ENCODE measurements at regions of chr1 and their contacts with region 1.

Region 1: GRCh38 chr1:30790850-30791778 is 33.5 kb upstream of the LAPTM5 start:
- DNase-seq: peak; percentile 32
- ATAC-seq: peak; percentile 56
- H3K4me3 Mint-ChIP-seq: no peak overlapping the region
- H3K27ac Mint-ChIP-seq: no peak overlapping the region
- H3K4me1 Mint-ChIP-seq: peaks cover 9% of the 10 kb centered on the region
- H3K27me3 Mint-ChIP-seq: peaks cover 4% of the 10 kb centered on the region
- CTCF ChIP-seq: no peak

Region 2: DNA sequence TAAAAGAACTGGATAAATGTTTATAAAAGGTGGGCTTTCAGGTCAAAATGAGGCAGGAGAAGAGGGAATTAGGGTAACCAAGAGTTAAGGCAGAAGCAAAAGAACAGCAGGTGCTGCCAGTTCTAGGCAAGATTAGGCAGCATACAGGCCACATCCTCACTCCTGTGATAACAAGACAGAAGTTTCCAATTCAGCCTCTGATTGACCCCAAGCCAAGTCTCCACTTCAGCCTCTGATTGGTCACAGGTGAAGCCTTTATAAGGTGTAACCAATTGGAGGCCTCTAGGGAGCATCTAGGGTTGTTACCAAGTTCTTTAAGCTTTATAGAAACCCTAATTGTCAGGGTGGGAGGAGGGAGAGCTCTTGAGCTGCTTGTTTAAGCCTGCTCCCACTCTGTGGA is 228.6 kb before region 1 on chr1:
- CTCF ChIA-PET with region 1: no interaction called
- POLR2A ChIA-PET with region 1: no interaction called
- intact Hi-C with region 1: no loop called
- DNase-seq: no peak
- ATAC-seq: no peak
- H3K4me3 Mint-ChIP-seq: no peak overlapping the region
- H3K27ac Mint-ChIP-seq: no peak overlapping the region
- H3K4me1 Mint-ChIP-seq: no peaks in the 10 kb centered on the region
- H3K27me3 Mint-ChIP-seq: peaks cover 1% of the 10 kb centered on the region
- CTCF ChIP-seq: no peak

Region 3: DNA sequence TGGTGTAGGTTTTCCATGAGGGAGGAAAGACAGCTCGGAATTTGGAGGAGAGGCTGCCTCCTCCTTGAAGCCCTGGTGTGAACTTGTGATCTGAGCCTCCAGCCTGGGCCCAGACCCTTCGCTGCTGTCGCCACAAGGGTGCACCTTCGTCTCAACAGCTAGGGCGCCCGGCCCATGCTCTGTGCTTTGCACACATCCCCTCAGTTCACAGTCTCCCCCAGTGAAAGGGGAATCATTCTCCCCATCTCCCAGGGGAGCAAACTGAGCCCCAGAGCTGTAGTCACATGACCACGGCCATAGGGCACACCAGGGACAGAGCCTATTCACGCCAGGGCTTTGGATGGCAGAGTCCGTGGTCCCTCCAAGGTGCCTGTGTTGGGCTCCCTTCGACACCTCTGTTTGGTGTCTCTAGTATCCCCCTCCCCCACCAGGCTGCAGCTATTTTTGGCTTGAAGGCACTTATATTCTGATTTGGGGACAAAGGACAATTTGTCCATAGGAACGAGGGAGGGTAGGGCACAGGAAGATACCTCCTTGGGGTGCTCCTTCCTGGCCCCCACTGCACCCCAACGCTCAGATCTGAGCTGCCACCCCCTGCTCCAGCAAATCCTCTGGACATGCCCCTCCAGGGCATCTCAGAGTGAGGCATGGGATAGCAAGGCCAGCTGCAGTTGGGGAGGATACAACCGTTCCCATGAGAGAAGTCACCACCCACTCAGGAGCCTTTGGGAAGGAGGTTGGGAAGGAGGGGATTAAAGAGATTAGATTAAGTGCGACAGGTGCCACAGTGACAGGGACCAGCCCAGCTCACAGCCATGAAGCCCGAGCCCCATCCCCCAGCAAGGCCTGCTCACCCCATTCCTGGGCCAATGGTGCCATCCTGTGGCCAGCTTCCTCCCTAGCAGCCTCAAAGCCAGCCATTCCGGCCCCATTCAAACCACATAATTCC is 83.4 kb before region 1 on chr1:
- CTCF ChIA-PET with region 1: no interaction called
- POLR2A ChIA-PET with region 1: no interaction called
- intact Hi-C with region 1: no loop called
- DNase-seq: peak; percentile 71
- ATAC-seq: peak; percentile 95
- H3K4me3 Mint-ChIP-seq: no peak overlapping the region
- H3K27ac Mint-ChIP-seq: no peak overlapping the region
- H3K4me1 Mint-ChIP-seq: no peaks in the 10 kb centered on the region
- H3K27me3 Mint-ChIP-seq: peaks cover 1% of the 10 kb centered on the region
- CTCF ChIP-seq: peak; percentile 78

Region 4: GRCh38 chr1:30840904-30841598 is 49.9 kb after region 1 on chr1:
- CTCF ChIA-PET with region 1: no interaction called
- POLR2A ChIA-PET with region 1: no interaction called
- intact Hi-C with region 1: no loop called
- DNase-seq: no peak
- ATAC-seq: no peak
- H3K4me3 Mint-ChIP-seq: no peak overlapping the region
- H3K27ac Mint-ChIP-seq: no peak overlapping the region
- H3K4me1 Mint-ChIP-seq: no peaks in the 10 kb centered on the region
- H3K27me3 Mint-ChIP-seq: peaks cover 42% of the 10 kb centered on the region
- CTCF ChIP-seq: no peak

Region 5: DNA sequence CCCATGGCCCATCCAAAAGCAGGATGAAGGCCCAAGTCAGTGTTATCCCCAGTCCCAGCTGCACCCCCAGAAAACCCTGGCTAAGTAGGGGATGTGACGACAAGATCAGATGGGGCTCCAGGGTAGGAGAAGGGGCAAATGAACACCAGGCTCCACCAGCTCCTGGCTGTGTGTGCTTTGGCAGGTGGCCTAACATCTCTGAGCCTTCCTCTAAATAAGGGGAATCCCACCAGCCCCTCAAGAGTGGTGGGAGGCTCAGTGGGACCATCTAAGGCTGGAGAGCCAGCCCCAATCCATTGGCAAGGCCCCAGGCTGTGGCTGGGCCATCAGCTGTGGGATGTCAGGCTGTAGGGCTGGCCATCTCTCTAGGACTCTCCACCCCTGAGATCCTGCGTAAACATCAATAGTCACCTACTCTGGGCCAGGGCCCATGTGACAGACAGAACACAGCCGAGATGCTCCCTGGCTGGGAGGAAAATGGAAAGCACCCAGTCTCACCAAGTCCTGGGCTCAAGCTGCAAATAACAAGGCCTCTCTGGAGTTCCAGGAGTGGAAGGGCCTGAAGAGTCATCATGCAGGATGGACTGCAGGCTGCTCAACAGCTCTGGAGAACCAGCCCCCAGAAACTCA is 109.9 kb after region 1 on chr1:
- CTCF ChIA-PET with region 1: no interaction called
- POLR2A ChIA-PET with region 1: no interaction called
- intact Hi-C with region 1: no loop called
- DNase-seq: no peak
- ATAC-seq: no peak
- H3K4me3 Mint-ChIP-seq: no peak overlapping the region
- H3K27ac Mint-ChIP-seq: no peak overlapping the region
- H3K4me1 Mint-ChIP-seq: no peaks in the 10 kb centered on the region
- H3K27me3 Mint-ChIP-seq: peaks cover 19% of the 10 kb centered on the region
- CTCF ChIP-seq: no peak

Region 6: DNA sequence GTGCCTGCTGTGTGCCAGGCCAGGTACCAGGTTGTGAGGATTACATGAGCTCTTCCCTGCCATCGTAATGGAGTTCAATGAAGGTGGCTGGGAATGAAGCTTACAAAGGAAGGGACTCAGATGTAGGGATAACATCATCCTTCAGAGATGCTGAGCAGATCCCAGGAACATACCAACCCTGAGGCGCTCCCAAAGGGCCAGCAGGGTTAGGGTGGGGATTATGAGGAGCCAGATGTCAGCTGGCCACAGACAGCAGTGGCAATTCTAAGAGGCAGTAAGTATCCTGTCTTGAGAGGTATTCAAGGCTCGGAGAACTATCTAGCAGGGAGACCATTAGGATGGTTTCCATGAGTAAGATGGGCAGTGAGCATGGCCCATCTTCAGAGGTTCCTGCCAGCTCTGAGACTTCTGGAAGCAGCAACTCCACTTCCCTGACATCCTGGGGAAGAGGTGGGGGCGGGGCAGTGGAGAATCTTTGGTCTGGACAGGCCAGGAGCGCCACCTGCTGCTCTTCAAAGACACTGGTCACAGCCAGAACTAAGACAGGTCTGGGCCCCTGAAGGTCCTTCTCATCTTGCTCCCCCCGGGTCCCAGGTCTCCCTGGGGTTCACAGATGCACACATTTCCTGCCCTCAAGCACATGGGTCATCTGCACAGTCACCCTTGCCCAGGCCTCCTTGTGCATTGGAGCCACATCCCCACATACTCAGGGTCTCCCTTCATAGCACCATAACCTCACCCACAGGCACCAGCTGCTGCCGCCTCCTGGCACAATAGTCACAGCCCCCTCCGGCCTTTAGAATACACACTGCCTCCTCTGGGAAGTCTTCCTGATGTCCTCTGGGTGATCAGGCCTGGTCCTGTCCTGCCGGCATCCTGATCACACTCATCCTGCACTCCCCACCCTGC is 120.2 kb after region 1 on chr1:
- CTCF ChIA-PET with region 1: interaction called, 17 read pairs
- POLR2A ChIA-PET with region 1: interaction called, 4 read pairs
- intact Hi-C with region 1: no loop called
- DNase-seq: peak; percentile 80
- ATAC-seq: peak; percentile 64
- H3K4me3 Mint-ChIP-seq: no peak overlapping the region
- H3K27ac Mint-ChIP-seq: no peak overlapping the region
- H3K4me1 Mint-ChIP-seq: peaks cover 9% of the 10 kb centered on the region
- H3K27me3 Mint-ChIP-seq: peaks cover 32% of the 10 kb centered on the region
- CTCF ChIP-seq: peak; percentile 74